GM10248 (cell line): ENCODE measurements at regions of chr5 and their contacts with region 1.

Region 1: DNA sequence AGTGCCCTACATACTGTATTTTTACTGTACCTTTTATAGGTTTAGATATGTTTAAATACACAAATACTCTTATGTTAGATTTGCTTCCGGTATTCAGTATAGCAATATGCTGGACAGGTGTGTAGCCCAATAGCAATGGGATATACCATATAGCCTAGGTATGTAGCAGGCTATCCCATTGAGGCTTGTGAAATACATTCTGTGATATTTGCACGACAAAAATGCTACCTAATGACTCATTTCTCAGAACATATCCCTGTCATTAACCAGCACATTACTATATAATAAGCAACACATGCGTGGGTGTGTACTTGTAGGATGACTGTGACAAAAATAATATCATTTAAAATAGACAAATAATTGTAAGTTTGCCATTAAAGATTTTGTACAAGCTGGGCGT is 208.8 kb downstream of the MRPS30 start:
- DNase-seq: no peak
- CTCF ChIP-seq: no peak

Region 2: GRCh38 chr5:44997506-44997905 is 20.1 kb before region 1 on chr5:
- CTCF ChIA-PET with region 1: interaction called, 13 read pairs
- POLR2A ChIA-PET with region 1: no interaction called
- DNase-seq: no peak
- CTCF ChIP-seq: no peak